ENCODE measurements at regions of chr14 and their contacts with region 1.

Region 1: GRCh38 chr14:66360366-66360926 is 125.7 kb upstream of the CCDC196 start:
- DNase-seq: no peak
- H3K4me3 ChIP-seq: no peak overlapping the region
- H3K27ac ChIP-seq: no peak overlapping the region
- H3K27me3 ChIP-seq: no peaks in the 10 kb centered on the region
- CTCF ChIP-seq: no peak

Region 2: GRCh38 chr14:66403183-66403582 is 42.7 kb after region 1 on chr14:
- intact Hi-C with region 1: loop called in 1 of 2 experiments (anchors 2 kb)
- DNase-seq: no peak
- H3K4me3 ChIP-seq: no peak overlapping the region
- H3K27ac ChIP-seq: no peak overlapping the region
- H3K27me3 ChIP-seq: no peaks in the 10 kb centered on the region
- CTCF ChIP-seq: peak in 55 of 56 donors; percentile 22 to 71 (median 56)

Measured in dorsolateral prefrontal cortex (tissue), 120 donors.